Caco-2 (cell line): ENCODE measurements at regions of chr6 and their contacts with region 1.

Region 1: GRCh38 chr6:127855542-127856159 is 45.2 kb downstream of the THEMIS start:
- DNase-seq: peak in 1 of 2 experiments; percentile 36
- H3K4me3 ChIP-seq: no peak overlapping the region
- H3K4me3 Mint-ChIP-seq: no peak overlapping the region
- H3K27ac Mint-ChIP-seq: no peak overlapping the region
- H3K4me1 ChIP-seq: no peaks in the 10 kb centered on the region
- H3K4me1 Mint-ChIP-seq: no peaks in the 10 kb centered on the region
- H3K27me3 ChIP-seq: no peaks in the 10 kb centered on the region
- H3K27me3 Mint-ChIP-seq: no peaks in the 10 kb centered on the region
- CTCF ChIP-seq: peak; percentile 42 to 62

Region 2: DNA sequence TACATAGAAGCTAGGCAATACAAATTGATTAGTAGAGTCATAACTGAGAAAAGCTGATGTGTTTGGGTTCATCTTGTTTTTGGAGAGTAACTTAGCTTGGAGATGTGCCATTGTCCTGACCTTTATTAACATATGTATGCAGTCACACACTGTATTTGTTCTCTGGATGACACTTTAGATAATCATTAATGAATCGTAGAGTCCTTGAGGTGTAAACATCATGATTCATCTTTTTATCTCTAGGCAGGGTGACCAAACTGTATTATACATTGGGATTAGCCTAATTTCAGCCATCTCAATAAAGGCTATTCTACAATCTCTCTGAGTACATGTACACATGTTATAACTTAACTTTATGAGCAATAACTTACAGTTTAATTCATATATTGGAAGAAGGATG is 332.9 kb before region 1 on chr6:
- CTCF ChIA-PET with region 1: no interaction called
- POLR2A ChIA-PET with region 1: no interaction called
- intact Hi-C with region 1: no loop called
- DNase-seq: no peak
- H3K4me3 ChIP-seq: no peak overlapping the region
- H3K4me3 Mint-ChIP-seq: no peak overlapping the region
- H3K27ac Mint-ChIP-seq: no peak overlapping the region
- H3K4me1 ChIP-seq: no peaks in the 10 kb centered on the region
- H3K4me1 Mint-ChIP-seq: no peaks in the 10 kb centered on the region
- H3K27me3 ChIP-seq: no peaks in the 10 kb centered on the region
- H3K27me3 Mint-ChIP-seq: peaks cover 18% of the 10 kb centered on the region
- CTCF ChIP-seq: no peak

Region 3: DNA sequence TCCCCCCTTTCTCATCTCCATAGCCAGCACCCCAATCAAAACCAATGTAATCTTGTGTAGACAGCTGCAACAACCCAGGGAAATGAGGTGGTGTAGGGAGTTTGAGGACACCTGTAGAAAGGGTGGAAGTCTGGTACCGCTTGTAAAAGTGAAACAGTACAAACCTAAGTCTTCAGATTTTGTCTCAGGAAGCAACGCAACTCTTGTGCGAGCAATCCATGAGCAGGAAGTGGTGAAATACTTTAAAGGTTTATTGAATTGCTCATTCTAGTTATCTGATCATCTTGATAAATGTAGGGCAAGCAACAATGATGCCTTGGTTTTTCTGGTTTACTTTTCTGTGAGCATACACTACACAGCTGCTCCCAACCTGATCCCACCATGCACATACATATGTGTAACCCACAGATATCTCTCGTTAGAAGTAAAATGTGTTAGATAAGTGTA is 116.3 kb after region 1 on chr6:
- CTCF ChIA-PET with region 1: no interaction called
- POLR2A ChIA-PET with region 1: no interaction called
- intact Hi-C with region 1: loop called (anchors 10 kb)
- DNase-seq: no peak
- H3K4me3 ChIP-seq: no peak overlapping the region
- H3K4me3 Mint-ChIP-seq: no peak overlapping the region
- H3K27ac Mint-ChIP-seq: no peak overlapping the region
- H3K4me1 ChIP-seq: peaks cover 12% of the 10 kb centered on the region; the same call in 1 of the 2 replicates
- H3K4me1 Mint-ChIP-seq: peaks cover 6% of the 10 kb centered on the region
- H3K27me3 ChIP-seq: no peaks in the 10 kb centered on the region
- H3K27me3 Mint-ChIP-seq: no peaks in the 10 kb centered on the region
- CTCF ChIP-seq: no peak

Region 4: GRCh38 chr6:128731249-128732165 is 875.9 kb after region 1 on chr6:
- CTCF ChIA-PET with region 1: interaction called, 9 read pairs
- POLR2A ChIA-PET with region 1: no interaction called
- intact Hi-C with region 1: loop called (anchors 1 kb)
- DNase-seq: peak in 1 of 2 experiments; percentile 37
- H3K4me3 ChIP-seq: no peak overlapping the region
- H3K4me3 Mint-ChIP-seq: no peak overlapping the region
- H3K27ac Mint-ChIP-seq: no peak overlapping the region
- H3K4me1 ChIP-seq: no peaks in the 10 kb centered on the region
- H3K4me1 Mint-ChIP-seq: no peaks in the 10 kb centered on the region
- H3K27me3 ChIP-seq: no peaks in the 10 kb centered on the region
- H3K27me3 Mint-ChIP-seq: peaks cover 14% of the 10 kb centered on the region
- CTCF ChIP-seq: peak; percentile 38 to 45